ENCODE measurements at regions of chr14 and their contacts with region 1.

Region 1: DNA sequence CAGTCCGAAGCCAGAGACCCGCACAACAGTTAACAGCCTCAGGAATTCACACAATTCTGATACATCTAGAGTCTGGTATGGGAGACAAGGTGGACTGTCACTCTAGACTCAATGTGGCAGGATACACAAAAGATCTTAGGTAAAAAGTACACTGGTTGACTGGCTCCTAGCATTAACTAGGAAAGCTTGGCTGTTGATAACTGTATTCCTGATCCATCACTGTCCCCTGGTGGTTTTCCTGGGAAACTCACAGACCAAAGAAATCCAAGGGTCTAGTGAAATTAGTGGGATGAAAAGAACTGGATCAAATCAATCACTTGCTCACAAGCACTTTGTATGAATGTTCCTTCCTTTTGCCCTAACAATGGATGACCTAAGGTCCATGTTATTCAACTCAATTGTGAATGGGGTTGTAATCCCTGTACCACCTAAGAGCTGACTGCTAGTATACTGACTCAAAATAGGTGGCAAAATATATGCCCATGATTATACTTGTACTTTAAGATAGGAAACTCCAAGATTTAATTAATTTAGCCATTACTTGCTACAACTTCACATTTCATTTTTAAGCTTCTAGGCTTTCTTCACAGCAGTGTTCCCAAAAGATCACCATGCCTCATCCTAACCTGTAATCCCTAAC is 14.0 kb downstream of the NPC2 start:
- DNase-seq: no peak
- H3K4me3 ChIP-seq: no peak overlapping the region
- H3K27ac ChIP-seq: no peak overlapping the region
- H3K4me1 ChIP-seq: peaks cover 0 to 3% (median 0%) of the 10 kb centered on the region in 4 experiments; a peak in 2 of 7 replicates
- H3K27me3 ChIP-seq: no peaks in the 10 kb centered on the region
- CTCF ChIP-seq: peak in 2 of 3 experiments; percentile 92 to 93; a peak in 3 of 4 replicates
- EP300 ChIP-seq: no peak
- POLR2A ChIP-seq: no peak
- RAD21 ChIP-seq: peak; percentile 100

Region 2: GRCh38 chr14:74302634-74303577 is 176.2 kb before region 1 on chr14 and contains the start of gene ABCD4:
- CTCF ChIA-PET with region 1: interaction called, 167 read pairs
- POLR2A ChIA-PET with region 1: interaction called, 11 read pairs
- DNase-seq: peak; percentile 90 to 99
- H3K4me3 ChIP-seq: peak within 1 kb of the TSS; percentile 76 to 99 (median 80)
- H3K27ac ChIP-seq: peak within 1 kb of the TSS; percentile 46; the same call in 1 of the 2 replicates
- H3K4me1 ChIP-seq: no peaks in the 10 kb centered on the region
- H3K27me3 ChIP-seq: no peaks in the 10 kb centered on the region
- CTCF ChIP-seq: peak; percentile 57 to 70 (median 63)
- EP300 ChIP-seq: 0 out of 3 replicates have a peak, but pooled peaks of 1 of the 2 experiments have one; percentile 60
- POLR2A ChIP-seq: peak; percentile 98 to 100
- RAD21 ChIP-seq: 0 out of 4 replicates have a peak, but pooled peaks of 1 of the 2 experiments have one; percentile 8
- total RNA-seq, gene ABCD4: 84.8 and 97.7 TPM in 2 replicates

Region 3: GRCh38 chr14:74324931-74325361 is 154.2 kb before region 1 on chr14:
- CTCF ChIA-PET with region 1: interaction called, 77 read pairs
- POLR2A ChIA-PET with region 1: interaction called, 15 read pairs
- DNase-seq: peak in 1 of 2 experiments; percentile 57
- H3K4me3 ChIP-seq: no peak overlapping the region
- H3K27ac ChIP-seq: peak overlapping the region; percentile 66; the same call in 1 of the 2 replicates
- H3K4me1 ChIP-seq: peaks cover 16 to 22% (median 19%) of the 10 kb centered on the region in 4 experiments
- H3K27me3 ChIP-seq: no peaks in the 10 kb centered on the region
- CTCF ChIP-seq: peak in 2 of 3 experiments; percentile 50 to 61; a peak in 2 of 4 replicates
- EP300 ChIP-seq: no peak
- POLR2A ChIP-seq: 0 out of 3 replicates have a peak, but pooled peaks of 1 of the 2 experiments have one; percentile 25
- RAD21 ChIP-seq: peak; percentile 77 to 78

Region 4: GRCh38 chr14:74362361-74362915 is 116.7 kb before region 1 on chr14:
- CTCF ChIA-PET with region 1: interaction called, 60 read pairs
- POLR2A ChIA-PET with region 1: interaction called, 11 read pairs
- DNase-seq: peak; percentile 77 to 96
- H3K4me3 ChIP-seq: no peak overlapping the region
- H3K27ac ChIP-seq: no peak overlapping the region
- H3K4me1 ChIP-seq: peaks cover 11 to 31% (median 14%) of the 10 kb centered on the region in 4 experiments
- H3K27me3 ChIP-seq: no peaks in the 10 kb centered on the region
- CTCF ChIP-seq: peak; percentile 85 to 99 (median 92)
- EP300 ChIP-seq: no peak; a peak in 1 of 3 replicates
- POLR2A ChIP-seq: peak in 1 of 2 experiments; percentile 40; a peak in 1 of 3 replicates
- RAD21 ChIP-seq: peak; percentile 96 to 97

Region 5: DNA sequence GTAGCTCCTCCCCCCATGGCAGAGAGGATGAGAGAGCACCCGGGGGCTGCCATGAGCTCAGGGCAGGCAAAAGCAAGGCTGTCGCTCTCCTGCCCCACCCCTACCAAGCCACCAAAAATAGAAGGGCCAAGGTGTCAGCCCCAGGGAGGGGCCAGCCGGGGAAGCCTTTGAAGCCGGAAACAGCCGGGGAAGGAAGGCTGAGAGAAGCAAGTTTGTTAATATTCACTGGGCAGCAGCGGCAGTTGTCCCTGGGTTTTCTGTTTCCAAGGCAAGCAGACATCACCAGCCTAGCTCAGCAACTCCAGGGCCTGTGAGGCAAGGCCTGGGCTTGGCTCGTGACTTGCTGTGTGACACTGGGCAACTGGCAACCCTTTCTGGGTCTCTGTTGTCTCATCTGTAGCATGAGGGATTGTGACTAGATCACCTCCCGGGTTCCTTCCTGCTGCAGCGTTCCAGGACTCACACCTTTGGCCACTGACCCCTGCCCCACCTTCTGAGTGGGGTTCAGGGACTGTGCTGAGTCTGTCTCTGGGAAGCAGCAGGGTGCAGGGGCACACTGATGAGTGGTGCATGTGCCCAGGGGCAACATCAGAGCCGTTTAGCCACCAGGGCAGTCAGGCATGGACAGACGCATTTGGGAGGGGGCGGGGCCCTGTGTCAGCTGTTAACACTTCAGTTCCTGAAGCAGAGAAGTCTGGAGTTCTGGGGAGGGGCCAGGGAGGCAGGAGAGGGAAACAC is 77.4 kb before region 1 on chr14:
- CTCF ChIA-PET with region 1: interaction called, 22 read pairs
- POLR2A ChIA-PET with region 1: interaction called, 3 read pairs
- DNase-seq: peak in 1 of 2 experiments; percentile 76
- H3K4me3 ChIP-seq: no peak overlapping the region
- H3K27ac ChIP-seq: no peak overlapping the region
- H3K4me1 ChIP-seq: peaks cover 3 to 34% (median 25%) of the 10 kb centered on the region in 4 experiments
- H3K27me3 ChIP-seq: no peaks in the 10 kb centered on the region
- CTCF ChIP-seq: no peak
- EP300 ChIP-seq: no peak
- POLR2A ChIP-seq: no peak
- RAD21 ChIP-seq: no peak

Region 6: DNA sequence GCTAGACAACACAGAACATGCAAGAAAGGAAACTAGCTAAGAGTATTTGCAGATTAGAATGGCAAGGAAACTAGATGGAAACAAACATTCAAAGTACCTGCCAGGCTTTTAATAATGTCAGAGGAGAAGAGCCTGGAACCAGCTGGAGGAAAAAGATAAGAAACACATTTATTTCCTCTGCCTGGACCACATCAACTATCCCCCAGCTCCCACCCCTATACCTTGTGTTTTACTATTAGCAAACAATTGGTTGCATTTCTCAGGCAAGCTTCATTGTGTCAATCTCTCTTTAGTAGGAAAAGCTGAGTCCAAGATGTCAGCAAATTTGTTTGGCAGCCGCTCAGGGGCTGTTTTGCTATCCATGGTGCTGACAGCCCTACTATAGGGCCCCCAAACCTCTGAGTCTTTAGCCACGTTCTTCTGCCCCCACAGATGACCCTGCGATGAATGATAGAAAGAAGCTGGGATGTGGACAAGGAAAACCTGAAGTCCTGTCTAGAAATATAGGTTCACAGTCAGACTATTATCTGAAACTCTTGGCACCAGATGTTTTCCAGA is 41.5 kb before region 1 on chr14:
- CTCF ChIA-PET with region 1: interaction called, 11 read pairs
- POLR2A ChIA-PET with region 1: no interaction called
- DNase-seq: peak in 1 of 2 experiments; percentile 49
- H3K4me3 ChIP-seq: no peak overlapping the region
- H3K27ac ChIP-seq: no peak overlapping the region
- H3K4me1 ChIP-seq: peaks cover 2 to 12% (median 5%) of the 10 kb centered on the region in 4 experiments; a peak in 5 of 7 replicates
- H3K27me3 ChIP-seq: no peaks in the 10 kb centered on the region
- CTCF ChIP-seq: no peak
- EP300 ChIP-seq: no peak
- POLR2A ChIP-seq: no peak
- RAD21 ChIP-seq: 0 out of 4 replicates have a peak, but pooled peaks have one; percentile 4 to 10

Region 7: GRCh38 chr14:74491956-74492775 is 13.1 kb after region 1 on chr14:
- CTCF ChIA-PET with region 1: interaction called, 18 read pairs
- POLR2A ChIA-PET with region 1: interaction called, 5 read pairs
- DNase-seq: no peak
- H3K4me3 ChIP-seq: peak overlapping the region; percentile 69 to 85 (median 74)
- H3K27ac ChIP-seq: no peak overlapping the region
- H3K4me1 ChIP-seq: peaks cover 0 to 6% (median 2%) of the 10 kb centered on the region in 4 experiments; a peak in 4 of 7 replicates
- H3K27me3 ChIP-seq: no peaks in the 10 kb centered on the region
- CTCF ChIP-seq: peak in 1 of 3 experiments; percentile 30; a peak in 2 of 4 replicates
- EP300 ChIP-seq: no peak
- POLR2A ChIP-seq: no peak
- RAD21 ChIP-seq: peak; percentile 17 to 38; a peak in 2 of 4 replicates

Region 8: GRCh38 chr14:74583689-74584434 is 104.7 kb after region 1 on chr14:
- CTCF ChIA-PET with region 1: no interaction called
- POLR2A ChIA-PET with region 1: no interaction called
- DNase-seq: no peak
- H3K4me3 ChIP-seq: no peak overlapping the region
- H3K27ac ChIP-seq: no peak overlapping the region
- H3K4me1 ChIP-seq: 0 out of 7 replicates have a peak, but pooled peaks cover 0 to 2% (median 0%) of the 10 kb centered on the region in 4 experiments
- H3K27me3 ChIP-seq: no peaks in the 10 kb centered on the region
- CTCF ChIP-seq: no peak
- EP300 ChIP-seq: no peak
- POLR2A ChIP-seq: no peak
- RAD21 ChIP-seq: no peak